ENCODE measurements at regions of chr10 and their contacts with region 1.

Region 1: DNA sequence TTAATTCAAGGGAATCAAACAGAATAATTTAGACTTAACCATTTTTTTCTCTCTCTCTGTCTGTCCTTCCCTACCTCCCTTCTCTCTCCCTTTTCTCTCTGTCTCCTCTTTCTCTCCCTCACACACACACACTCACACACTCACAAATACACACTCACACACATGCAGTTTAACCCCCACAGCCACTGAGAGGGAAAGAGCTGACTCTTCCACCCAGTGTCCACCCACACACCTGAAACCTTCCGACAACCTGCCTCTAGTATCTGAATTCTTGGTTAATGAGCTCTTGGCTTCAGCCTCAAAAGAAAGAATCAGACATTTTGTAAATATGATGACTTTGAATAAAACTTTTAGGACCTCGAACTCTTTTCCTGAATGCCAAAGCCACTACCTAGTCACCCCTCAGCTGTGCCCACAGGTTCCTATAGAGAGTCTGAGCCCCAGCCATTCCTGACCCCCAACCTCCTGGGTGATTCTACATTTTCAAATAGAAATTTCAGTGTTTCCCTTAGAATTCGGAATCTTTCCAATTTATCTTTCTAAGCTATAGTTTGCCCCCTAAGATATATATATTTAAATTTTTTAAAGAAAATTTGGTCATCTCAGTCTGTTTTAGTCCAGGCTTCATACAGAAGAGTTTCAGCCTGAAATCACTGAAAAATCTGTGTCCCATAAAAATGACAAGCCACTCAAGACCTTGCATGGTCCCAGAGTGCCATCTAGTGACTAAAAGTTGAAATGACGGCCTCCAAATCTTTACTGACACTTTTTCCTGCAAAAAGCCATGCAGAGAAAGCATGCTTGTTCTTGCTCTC is 202.8 kb downstream of the IPMK start:
- DNase-seq: no peak
- H3K4me3 Mint-ChIP-seq: no peak overlapping the region
- H3K27ac Mint-ChIP-seq: no peak overlapping the region
- H3K4me1 Mint-ChIP-seq: no peaks in the 10 kb centered on the region
- H3K27me3 Mint-ChIP-seq: peaks cover 6% of the 10 kb centered on the region

Region 2: DNA sequence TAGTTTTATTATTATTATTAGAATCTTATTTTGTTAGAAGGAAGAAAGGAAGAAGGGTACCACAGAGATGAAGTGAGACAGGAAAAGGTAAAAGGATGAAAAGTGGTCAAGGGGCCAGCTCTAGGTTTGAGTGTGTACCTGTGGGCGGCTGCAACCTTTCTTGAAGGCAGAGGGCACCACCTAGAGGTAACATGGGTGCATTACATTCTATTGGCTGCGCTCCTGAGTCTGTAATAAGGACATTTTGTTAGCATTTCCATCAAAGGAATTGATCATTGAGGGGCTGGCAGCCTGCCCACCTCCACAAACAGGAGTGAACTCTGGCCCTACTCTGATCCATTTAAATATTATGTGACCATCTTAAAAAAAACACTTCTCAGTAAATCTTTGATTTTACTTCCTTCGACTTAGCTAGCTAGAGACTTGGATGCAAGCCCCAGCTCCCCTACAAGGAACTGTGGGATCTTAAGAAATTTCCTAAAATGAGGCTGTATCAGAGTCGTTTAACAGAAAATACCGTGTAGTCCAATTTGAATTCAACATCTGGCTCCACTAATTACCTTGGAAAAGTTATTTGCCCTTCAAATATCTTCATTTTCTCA is 407.7 kb before region 1 on chr10:
- CTCF ChIA-PET with region 1: no interaction called
- POLR2A ChIA-PET with region 1: no interaction called
- intact Hi-C with region 1: loop called (anchors 10 kb)
- DNase-seq: peak; percentile 34
- H3K4me3 Mint-ChIP-seq: no peak overlapping the region
- H3K27ac Mint-ChIP-seq: no peak overlapping the region
- H3K4me1 Mint-ChIP-seq: no peaks in the 10 kb centered on the region
- H3K27me3 Mint-ChIP-seq: no peaks in the 10 kb centered on the region

Region 3: DNA sequence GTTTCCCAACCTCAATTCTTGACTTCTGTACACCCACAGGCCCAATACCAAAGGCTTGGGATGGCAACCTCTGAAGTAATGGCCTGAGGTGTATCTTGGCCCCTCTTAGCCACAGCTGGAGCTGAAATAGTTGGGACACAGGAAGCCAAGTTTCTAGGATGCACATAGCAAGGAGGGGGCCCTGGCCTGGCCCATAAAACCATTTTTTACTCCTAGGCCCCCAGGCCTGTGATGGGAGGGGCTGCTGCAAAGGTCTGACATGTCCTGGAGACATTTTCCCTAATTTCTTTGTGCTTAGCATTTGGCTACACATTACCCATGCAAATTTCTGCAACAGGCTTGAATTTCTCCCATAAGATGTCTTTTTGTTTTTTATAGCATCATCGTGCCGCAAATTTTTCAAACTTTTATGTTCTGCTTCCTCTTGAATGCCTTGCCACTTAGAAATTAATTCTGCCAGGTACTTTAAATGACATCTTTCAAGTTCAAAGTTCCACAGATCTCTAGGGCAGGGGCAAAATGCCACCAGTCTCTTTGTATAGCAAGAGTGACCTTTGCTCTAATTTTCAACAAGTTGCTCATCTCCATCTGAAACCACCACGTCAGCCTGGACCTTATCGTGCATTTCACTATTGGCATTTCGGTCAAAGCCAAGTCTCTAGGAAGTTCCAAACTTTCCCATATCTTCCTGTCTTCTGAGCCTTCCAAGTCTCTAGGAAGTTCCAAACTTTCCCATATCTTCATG is 288.1 kb before region 1 on chr10:
- CTCF ChIA-PET with region 1: no interaction called
- POLR2A ChIA-PET with region 1: no interaction called
- intact Hi-C with region 1: no loop called
- DNase-seq: no peak
- H3K4me3 Mint-ChIP-seq: no peak overlapping the region
- H3K27ac Mint-ChIP-seq: no peak overlapping the region
- H3K4me1 Mint-ChIP-seq: no peaks in the 10 kb centered on the region
- H3K27me3 Mint-ChIP-seq: no peaks in the 10 kb centered on the region